Aorta (tissue), 5 donors: ENCODE measurements at regions of chr11 and their contacts with region 1.

Region 1: DNA sequence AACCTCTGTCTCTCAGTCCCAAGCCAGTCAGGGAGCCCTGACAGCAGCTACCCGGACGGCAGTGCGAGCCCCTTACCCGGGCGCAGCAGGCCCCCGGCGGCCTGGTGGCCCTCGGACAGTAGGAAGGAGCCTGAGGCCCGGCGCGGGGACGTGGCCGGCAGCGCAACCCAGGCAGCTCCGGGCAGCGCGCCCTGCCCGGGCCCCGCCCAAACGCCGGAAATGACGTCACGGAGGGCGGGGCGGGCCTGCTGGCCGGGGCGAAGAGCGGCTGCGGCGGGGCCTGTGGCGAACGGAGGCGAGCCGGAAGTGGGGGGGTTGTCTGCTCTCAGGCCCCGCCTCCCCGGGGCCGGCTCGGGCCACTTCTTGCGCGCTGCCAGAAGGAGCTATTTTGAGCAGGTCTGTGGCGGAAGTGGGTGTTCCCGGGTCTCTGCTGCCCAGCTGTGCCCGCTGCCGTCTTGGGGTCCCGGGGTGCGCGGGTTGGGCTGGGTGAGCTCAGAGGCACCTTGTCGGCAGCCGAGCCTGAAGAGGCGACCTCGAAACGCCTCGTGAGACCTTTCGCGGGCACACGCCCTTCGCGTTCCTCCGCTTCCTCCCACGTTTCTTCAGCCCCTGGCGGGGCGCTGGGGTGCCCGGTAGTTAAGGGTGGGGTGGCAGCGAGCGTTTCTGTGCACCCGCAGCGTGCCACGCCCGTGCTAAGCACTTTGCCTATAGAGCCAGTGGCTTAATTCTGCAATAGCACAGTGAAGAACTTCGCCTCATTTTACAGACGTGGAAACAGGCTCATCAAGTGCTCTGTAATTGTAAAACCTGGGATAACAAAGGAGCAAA is at the start of gene C11orf24:
- DNase-seq: peak; percentile 97 to 98
- ATAC-seq: peak; percentile 98
- H3K4me3 ChIP-seq: peak within 1 kb of the TSS; percentile 75 to 79
- H3K27ac ChIP-seq: peak within 1 kb of the TSS; percentile 87 to 90
- H3K4me1 ChIP-seq: peaks cover 0 to 3% of the 10 kb centered on the region in 2 donors
- H3K27me3 ChIP-seq: no peaks in the 10 kb centered on the region
- total RNA-seq, gene C11orf24: 48.9 to 65.5 TPM

Region 2: DNA sequence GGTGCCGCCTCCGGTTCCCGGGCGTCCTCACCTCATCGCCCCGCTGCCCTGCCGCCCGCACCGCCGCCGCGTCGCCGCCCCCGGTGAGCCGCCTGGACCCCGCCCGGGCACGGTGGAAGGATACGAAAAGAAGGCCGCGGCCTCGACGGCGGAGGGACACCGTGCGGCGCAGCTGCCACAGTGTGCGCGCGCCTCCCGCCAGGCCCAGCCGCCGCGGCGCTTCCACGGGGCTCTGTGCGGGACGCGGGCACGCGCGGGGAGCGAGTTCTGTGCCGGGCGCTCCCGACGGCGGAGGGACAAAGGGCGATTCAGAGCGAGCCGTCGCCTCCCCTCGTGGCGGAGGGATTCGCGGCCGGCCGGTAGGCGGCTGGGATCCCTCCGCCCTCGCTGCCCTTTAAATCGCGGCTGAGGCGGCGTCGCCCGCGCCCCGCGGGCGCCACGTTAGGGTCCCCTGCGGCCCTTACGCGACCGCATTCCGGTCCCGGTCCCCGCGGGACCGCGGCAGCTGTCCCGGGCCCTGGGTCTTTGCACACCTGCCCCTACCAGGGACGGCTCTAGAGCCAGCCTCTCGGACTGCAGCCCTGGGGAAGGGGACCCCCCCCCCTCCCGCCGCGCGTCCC is 58.3 kb before region 1 on chr11:
- intact Hi-C with region 1: loop called in 1 of 2 experiments (anchors 10 kb)
- DNase-seq: peak; percentile 93
- ATAC-seq: peak; percentile 86
- H3K4me3 ChIP-seq: peak overlapping the region; percentile 88 to 91
- H3K27ac ChIP-seq: peak overlapping the region; percentile 93 to 100
- H3K4me1 ChIP-seq: peaks cover 0 to 4% of the 10 kb centered on the region in 2 donors
- H3K27me3 ChIP-seq: no peaks in the 10 kb centered on the region

Region 3: GRCh38 chr11:68312117-68312779 is 40.3 kb after region 1 on chr11 and contains the start of gene LRP5:
- intact Hi-C with region 1: loop called (anchors 5 kb)
- DNase-seq: no peak
- ATAC-seq: no peak
- H3K4me3 ChIP-seq: peak within 1 kb of the TSS; percentile 16 to 97
- H3K27ac ChIP-seq: peak within 1 kb of the TSS; percentile 38 to 61
- H3K4me1 ChIP-seq: no peaks in the 10 kb centered on the region
- H3K27me3 ChIP-seq: no peaks in the 10 kb centered on the region
- total RNA-seq, gene LRP5: 85.9 to 103 TPM